Mammary epithelial cell (primary cell): ENCODE measurements at regions of chr5 and their contacts with region 1.

Region 1: DNA sequence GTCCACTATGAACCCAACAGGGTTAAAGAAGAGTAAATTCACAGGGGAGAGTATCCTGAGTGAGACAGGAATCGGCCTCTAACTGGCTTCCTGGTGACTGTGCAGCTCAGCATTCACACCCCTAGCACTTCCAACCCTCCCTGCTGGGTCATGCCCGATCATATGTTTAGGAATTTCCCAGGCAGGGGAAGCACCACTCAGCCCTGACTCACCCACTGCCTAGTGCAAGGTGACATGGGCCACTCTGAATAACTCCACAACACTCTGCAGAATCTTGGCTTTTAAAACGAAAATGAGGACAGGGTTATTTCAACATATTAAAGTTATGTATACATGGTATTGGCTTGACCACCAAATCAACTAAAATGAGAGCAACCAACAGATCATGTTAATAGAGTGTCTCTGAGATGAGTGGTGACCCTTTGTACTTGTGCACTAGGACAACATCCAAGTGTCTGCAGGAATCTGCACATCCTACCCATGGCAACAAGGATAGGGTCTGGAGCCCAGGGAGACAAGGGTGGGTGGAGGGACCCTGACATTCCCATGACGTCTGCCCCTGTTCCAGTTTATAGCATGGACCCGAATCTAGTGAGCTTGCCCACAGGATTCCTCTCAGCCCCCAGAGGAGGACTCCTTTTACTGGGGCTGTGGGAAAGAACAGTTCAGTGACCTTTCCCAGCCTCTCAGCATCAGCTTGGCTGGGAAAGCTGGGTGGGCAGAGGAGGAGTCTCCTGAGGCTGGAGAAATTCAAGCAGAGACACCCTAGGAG is 485.8 kb downstream of the SEMA5A start:
- DNase-seq: peak; percentile 97
- H3K4me3 ChIP-seq: no peak overlapping the region
- H3K27ac ChIP-seq: peak overlapping the region; percentile 87
- H3K4me1 ChIP-seq: peaks cover 44% of the 10 kb centered on the region
- H3K27me3 ChIP-seq: no peaks in the 10 kb centered on the region
- CTCF ChIP-seq: no peak

Region 2: GRCh38 chr5:8773046-8773615 is 287.0 kb before region 1 on chr5:
- CTCF ChIA-PET with region 1: no interaction called
- dilution Hi-C with region 1: no loop called
- in situ Hi-C with region 1: no loop called
- intact Hi-C with region 1: no loop called
- DNase-seq: peak; percentile 49
- H3K4me3 ChIP-seq: no peak overlapping the region
- H3K27ac ChIP-seq: no peak overlapping the region
- H3K4me1 ChIP-seq: peaks cover 10% of the 10 kb centered on the region
- H3K27me3 ChIP-seq: no peaks in the 10 kb centered on the region
- CTCF ChIP-seq: no peak

Region 3: DNA sequence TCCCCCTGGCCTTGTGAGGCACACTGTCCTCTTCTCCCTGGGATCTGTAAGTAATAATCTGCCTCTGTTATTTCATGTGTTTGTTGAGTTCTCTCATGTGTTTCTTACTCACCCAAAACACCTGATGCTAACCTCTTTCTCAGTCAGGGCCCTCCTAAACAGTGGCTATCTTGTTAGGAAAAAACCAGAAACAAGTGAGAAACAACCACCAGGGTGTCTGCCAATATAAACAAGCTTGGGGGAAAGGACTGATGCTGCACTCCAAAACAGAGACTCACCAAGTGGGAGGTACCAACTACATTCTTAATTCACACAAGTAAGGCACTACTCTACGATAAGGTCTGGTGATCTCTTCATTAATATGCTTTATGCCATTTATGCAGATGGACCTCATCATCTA is 78.6 kb before region 1 on chr5:
- CTCF ChIA-PET with region 1: no interaction called
- dilution Hi-C with region 1: no loop called
- in situ Hi-C with region 1: no loop called
- intact Hi-C with region 1: loop called (anchors 5 kb)
- DNase-seq: peak; percentile 87
- H3K4me3 ChIP-seq: no peak overlapping the region
- H3K27ac ChIP-seq: peak overlapping the region; percentile 33
- H3K4me1 ChIP-seq: peaks cover 21% of the 10 kb centered on the region
- H3K27me3 ChIP-seq: no peaks in the 10 kb centered on the region
- CTCF ChIP-seq: peak in 1 of 2 donors; percentile 6

Region 4: GRCh38 chr5:9149988-9150387 is 89.9 kb after region 1 on chr5:
- CTCF ChIA-PET with region 1: no interaction called
- dilution Hi-C with region 1: no loop called
- in situ Hi-C with region 1: no loop called
- intact Hi-C with region 1: loop called (anchors 1 kb)
- DNase-seq: peak; percentile 99
- H3K4me3 ChIP-seq: no peak overlapping the region
- H3K27ac ChIP-seq: peak overlapping the region; percentile 79
- H3K4me1 ChIP-seq: peaks cover 27% of the 10 kb centered on the region
- H3K27me3 ChIP-seq: no peaks in the 10 kb centered on the region
- CTCF ChIP-seq: no peak

Region 5: GRCh38 chr5:9166202-9167112 is 106.4 kb after region 1 on chr5:
- CTCF ChIA-PET with region 1: no interaction called
- dilution Hi-C with region 1: loop called (anchors 5 kb)
- in situ Hi-C with region 1: no loop called
- intact Hi-C with region 1: no loop called
- DNase-seq: no peak
- H3K4me3 ChIP-seq: no peak overlapping the region
- H3K27ac ChIP-seq: no peak overlapping the region
- H3K4me1 ChIP-seq: peaks cover 22% of the 10 kb centered on the region
- H3K27me3 ChIP-seq: no peaks in the 10 kb centered on the region
- CTCF ChIP-seq: peak in 1 of 2 donors; percentile 9